Endothelial cell of umbilical vein (primary cell): ENCODE measurements at regions of chr12 and their contacts with region 1.

Region 1: GRCh38 chr12:71594214-71594948 is 69.3 kb downstream of the ZFC3H1 start:
- DNase-seq: no peak
- H3K4me3 ChIP-seq: no peak overlapping the region
- H3K27ac ChIP-seq: no peak overlapping the region
- H3K4me1 ChIP-seq: no peaks in the 10 kb centered on the region
- H3K27me3 ChIP-seq: peaks cover 9 to 30% of the 10 kb centered on the region in 2 experiments
- CTCF ChIP-seq: no peak
- POLR2A ChIP-seq: no peak

Region 2: GRCh38 chr12:71536939-71537622 is 57.3 kb before region 1 on chr12:
- CTCF ChIA-PET with region 1: no interaction called
- POLR2A ChIA-PET with region 1: no interaction called
- dilution Hi-C with region 1: no loop called
- intact Hi-C with region 1: no loop called
- DNase-seq: no peak
- H3K4me3 ChIP-seq: no peak overlapping the region
- H3K27ac ChIP-seq: no peak overlapping the region
- H3K4me1 ChIP-seq: no peaks in the 10 kb centered on the region
- H3K27me3 ChIP-seq: peaks cover 0 to 2% of the 10 kb centered on the region in 2 experiments
- CTCF ChIP-seq: no peak
- POLR2A ChIP-seq: no peak

Region 3: DNA sequence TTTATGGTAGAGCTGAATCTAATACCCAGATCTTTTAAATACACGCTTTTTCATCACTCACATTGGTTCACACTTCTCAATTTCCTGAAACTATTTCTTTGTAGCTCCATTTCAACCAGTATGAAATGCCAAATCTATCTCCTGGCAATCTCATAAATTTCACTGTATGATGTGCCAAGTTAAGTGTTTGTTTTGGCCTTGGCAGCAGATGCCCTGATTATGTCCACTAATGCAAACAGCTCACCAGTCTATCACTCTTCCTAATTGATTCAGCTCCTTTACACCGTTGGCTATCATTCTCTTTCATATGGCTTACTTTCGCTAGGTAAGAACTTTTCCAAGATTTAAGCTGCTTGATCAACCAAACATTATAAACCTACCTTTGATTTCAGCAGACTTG is 10.7 kb after region 1 on chr12:
- CTCF ChIA-PET with region 1: interaction called, 16 read pairs
- POLR2A ChIA-PET with region 1: no interaction called
- dilution Hi-C with region 1: no loop called
- intact Hi-C with region 1: no loop called
- DNase-seq: no peak
- H3K4me3 ChIP-seq: no peak overlapping the region
- H3K27ac ChIP-seq: no peak overlapping the region
- H3K4me1 ChIP-seq: no peaks in the 10 kb centered on the region
- H3K27me3 ChIP-seq: no peaks in the 10 kb centered on the region
- CTCF ChIP-seq: no peak
- POLR2A ChIP-seq: no peak

Region 4: GRCh38 chr12:71780237-71780822 is 185.9 kb after region 1 on chr12:
- CTCF ChIA-PET with region 1: no interaction called
- POLR2A ChIA-PET with region 1: no interaction called
- dilution Hi-C with region 1: no loop called
- intact Hi-C with region 1: no loop called
- DNase-seq: peak; percentile 71
- H3K4me3 ChIP-seq: no peak overlapping the region
- H3K27ac ChIP-seq: no peak overlapping the region
- H3K4me1 ChIP-seq: peaks cover 10% of the 10 kb centered on the region
- H3K27me3 ChIP-seq: no peaks in the 10 kb centered on the region
- CTCF ChIP-seq: peak; percentile 47 to 61
- POLR2A ChIP-seq: no peak